ENCODE measurements at regions of chr4 and their contacts with region 1.

Region 1: GRCh38 chr4:94390804-94391410 is 48.3 kb upstream of the HPGDS start:
- DNase-seq: no peak
- H3K4me3 ChIP-seq: no peak overlapping the region
- H3K27ac ChIP-seq: no peak overlapping the region
- H3K4me1 ChIP-seq: no peaks in the 10 kb centered on the region
- H3K27me3 ChIP-seq: no peaks in the 10 kb centered on the region
- CTCF ChIP-seq: peak; percentile 51 to 67

Region 2: GRCh38 chr4:93791570-93792195 is 599.2 kb before region 1 on chr4:
- CTCF ChIA-PET with region 1: no interaction called
- dilution Hi-C with region 1: no loop called
- in situ Hi-C with region 1: loop called (anchors 25 kb)
- intact Hi-C with region 1: loop called (anchors 1 kb)
- DNase-seq: peak; percentile 26
- H3K4me3 ChIP-seq: no peak overlapping the region
- H3K27ac ChIP-seq: no peak overlapping the region
- H3K4me1 ChIP-seq: no peaks in the 10 kb centered on the region
- H3K27me3 ChIP-seq: no peaks in the 10 kb centered on the region
- CTCF ChIP-seq: peak; percentile 89 to 90

Region 3: GRCh38 chr4:94284889-94285288 is 106.0 kb before region 1 on chr4:
- CTCF ChIA-PET with region 1: no interaction called
- dilution Hi-C with region 1: loop called (anchors 5 kb)
- in situ Hi-C with region 1: no loop called
- intact Hi-C with region 1: no loop called
- DNase-seq: no peak
- H3K4me3 ChIP-seq: no peak overlapping the region
- H3K27ac ChIP-seq: no peak overlapping the region
- H3K4me1 ChIP-seq: no peaks in the 10 kb centered on the region
- H3K27me3 ChIP-seq: no peaks in the 10 kb centered on the region
- CTCF ChIP-seq: no peak

Region 4: GRCh38 chr4:94304365-94304971 is 86.4 kb before region 1 on chr4:
- CTCF ChIA-PET with region 1: no interaction called
- dilution Hi-C with region 1: no loop called
- in situ Hi-C with region 1: no loop called
- intact Hi-C with region 1: loop called (anchors 1 kb)
- DNase-seq: peak; percentile 15
- H3K4me3 ChIP-seq: no peak overlapping the region
- H3K27ac ChIP-seq: no peak overlapping the region
- H3K4me1 ChIP-seq: no peaks in the 10 kb centered on the region
- H3K27me3 ChIP-seq: no peaks in the 10 kb centered on the region
- CTCF ChIP-seq: peak; percentile 52 to 65

Region 5: DNA sequence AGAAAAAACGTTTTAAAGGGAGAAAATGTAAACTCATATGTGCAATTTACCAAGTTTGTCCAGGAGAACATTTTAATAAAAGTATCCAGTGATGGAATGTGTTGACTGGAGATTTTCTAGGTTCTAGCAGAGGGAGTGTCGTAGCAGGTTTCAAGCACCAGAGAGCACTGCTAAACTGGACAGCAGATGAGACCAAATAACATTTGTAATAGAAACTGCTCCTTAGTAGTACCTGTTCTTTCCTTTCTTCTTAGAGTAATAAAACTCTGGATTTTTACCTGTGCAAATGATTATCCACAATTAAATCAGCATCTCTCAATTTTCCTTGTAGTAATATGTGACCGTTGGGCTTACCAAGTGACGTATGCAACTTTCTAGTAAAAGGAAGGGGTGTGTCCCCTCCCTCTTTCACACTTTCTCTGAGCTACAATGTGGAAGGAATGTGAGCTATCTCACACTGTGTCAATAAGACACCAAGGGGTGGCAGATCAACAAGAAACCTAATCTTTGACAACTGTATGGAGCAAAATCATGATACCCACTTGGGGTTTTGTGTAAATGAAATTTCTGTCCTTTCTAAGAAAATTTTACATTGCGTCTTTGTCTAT is 57.8 kb before region 1 on chr4:
- CTCF ChIA-PET with region 1: no interaction called
- dilution Hi-C with region 1: no loop called
- in situ Hi-C with region 1: no loop called
- intact Hi-C with region 1: loop called (anchors 1 kb)
- DNase-seq: no peak
- H3K4me3 ChIP-seq: no peak overlapping the region
- H3K27ac ChIP-seq: no peak overlapping the region
- H3K4me1 ChIP-seq: no peaks in the 10 kb centered on the region
- H3K27me3 ChIP-seq: no peaks in the 10 kb centered on the region
- CTCF ChIP-seq: peak in 1 of 2 donors; percentile 23